Activated CD4-positive, alpha-beta memory T cell treated with anti-CD3 and anti-CD28 coated beads for 36 hours (primary cell): ENCODE measurements at regions of chr12 and their contacts with region 1.

Region 1: DNA sequence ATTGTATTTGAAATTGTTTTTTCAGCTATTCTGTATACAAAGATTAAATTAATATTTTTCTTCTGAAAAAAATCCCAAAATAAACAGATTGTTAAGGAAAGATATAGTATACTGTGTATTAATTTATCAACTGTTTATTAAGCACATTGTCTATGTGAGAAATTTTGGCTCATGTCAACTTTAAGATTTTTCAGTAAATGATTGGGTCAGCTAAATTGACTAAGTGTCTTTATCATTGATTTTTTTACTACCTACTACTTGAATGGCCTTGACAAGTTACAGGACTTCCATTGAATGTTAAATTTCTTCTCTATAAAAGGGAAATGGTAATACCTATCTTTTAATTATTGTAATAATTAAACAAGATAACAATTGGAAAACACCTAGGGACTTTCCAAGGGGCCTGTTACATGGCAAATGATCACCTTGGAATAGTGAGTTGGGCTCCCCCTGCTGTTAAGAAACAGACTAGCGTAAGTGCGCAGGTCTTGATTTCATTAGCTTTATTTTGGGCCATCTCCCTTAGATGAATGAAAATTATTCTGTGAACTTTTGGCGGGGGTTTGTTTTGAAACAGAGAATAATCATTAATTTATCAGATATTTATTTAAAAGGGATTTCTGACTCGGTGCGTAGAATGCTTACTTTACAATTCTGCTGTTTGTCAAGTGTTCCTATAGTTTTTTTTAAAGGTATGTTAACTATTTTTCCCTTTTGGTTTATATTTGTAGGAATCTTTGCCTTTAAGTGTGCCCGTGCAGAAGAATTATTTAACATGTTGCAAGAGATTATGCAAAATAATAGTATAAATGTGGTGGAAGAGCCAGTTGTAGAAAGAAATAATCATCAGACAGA is 14.5 kb upstream of the CCT2 start:
- DNase-seq: peak; percentile 54
- H3K4me3 Mint-ChIP-seq: no peak overlapping the region
- H3K27ac Mint-ChIP-seq: no peak overlapping the region
- H3K4me1 Mint-ChIP-seq: peaks cover 9% of the 10 kb centered on the region
- H3K27me3 Mint-ChIP-seq: no peaks in the 10 kb centered on the region

Region 2: DNA sequence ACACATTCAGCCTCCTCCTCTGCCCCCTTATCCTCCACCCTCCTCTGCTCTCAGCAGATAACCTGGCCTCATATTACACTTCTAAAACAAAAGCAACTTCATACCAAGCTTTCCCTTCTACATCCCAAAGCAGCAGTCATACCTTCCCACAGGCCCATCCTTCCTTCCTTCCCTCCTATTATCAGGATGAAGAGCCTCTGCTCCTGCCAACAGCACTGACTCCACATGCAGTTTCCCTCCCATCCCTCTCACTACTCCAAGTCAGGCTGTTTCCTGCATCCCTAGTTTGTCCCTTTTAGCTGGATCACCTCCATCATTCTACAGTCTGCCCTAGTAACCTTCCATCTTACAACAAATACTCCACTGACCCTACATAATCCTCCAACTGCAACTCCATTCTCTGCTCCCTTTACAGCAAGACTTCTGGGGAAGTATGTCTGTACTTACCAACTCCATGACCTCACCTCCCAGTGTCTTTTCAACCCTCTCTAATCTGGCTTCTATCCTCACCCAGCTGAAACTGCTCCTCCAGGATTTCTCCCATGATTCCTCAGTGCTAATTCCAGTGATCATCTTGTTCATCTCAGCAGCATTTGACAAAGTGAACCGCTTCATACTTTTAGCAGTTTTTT is 216.1 kb before region 1 on chr12:
- CTCF ChIA-PET with region 1: interaction called, 76 read pairs
- POLR2A ChIA-PET with region 1: interaction called, 4 read pairs
- intact Hi-C with region 1: loop called (anchors 1 kb)
- DNase-seq: no peak
- H3K4me3 Mint-ChIP-seq: no peak overlapping the region
- H3K27ac Mint-ChIP-seq: no peak overlapping the region
- H3K4me1 Mint-ChIP-seq: peaks cover 17% of the 10 kb centered on the region
- H3K27me3 Mint-ChIP-seq: no peaks in the 10 kb centered on the region

Region 3: GRCh38 chr12:69415471-69416275 is 155.1 kb before region 1 on chr12:
- CTCF ChIA-PET with region 1: interaction called, 3 read pairs
- POLR2A ChIA-PET with region 1: no interaction called
- intact Hi-C with region 1: loop called (anchors 1 kb)
- DNase-seq: peak; percentile 15
- H3K4me3 Mint-ChIP-seq: no peak overlapping the region
- H3K27ac Mint-ChIP-seq: no peak overlapping the region
- H3K4me1 Mint-ChIP-seq: no peaks in the 10 kb centered on the region
- H3K27me3 Mint-ChIP-seq: no peaks in the 10 kb centered on the region

Region 4: GRCh38 chr12:69534389-69534822 is 36.4 kb before region 1 on chr12:
- CTCF ChIA-PET with region 1: interaction called, 16 read pairs
- POLR2A ChIA-PET with region 1: no interaction called
- intact Hi-C with region 1: no loop called
- DNase-seq: peak; percentile 59
- H3K4me3 Mint-ChIP-seq: no peak overlapping the region
- H3K27ac Mint-ChIP-seq: peak overlapping the region; percentile 30
- H3K4me1 Mint-ChIP-seq: peaks cover 20% of the 10 kb centered on the region
- H3K27me3 Mint-ChIP-seq: no peaks in the 10 kb centered on the region

Region 5: DNA sequence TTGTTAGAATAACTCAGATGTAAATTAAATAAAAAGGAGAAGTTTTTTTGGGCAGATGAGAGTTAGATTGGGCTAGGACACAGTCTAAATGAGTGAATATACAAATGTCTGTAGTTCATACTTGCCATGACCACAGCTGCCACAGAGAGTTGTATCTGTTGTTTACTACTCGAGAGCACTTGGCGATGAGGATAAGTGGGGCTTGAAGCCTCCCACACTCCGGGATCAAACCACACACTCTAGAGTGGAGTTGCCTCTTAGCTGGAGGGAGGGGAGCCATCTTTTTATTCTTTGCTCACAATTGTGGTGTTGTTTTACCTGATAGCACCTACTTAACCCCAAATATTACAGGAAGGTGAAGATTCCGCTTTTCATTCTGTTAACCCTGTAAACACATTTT is 100.8 kb after region 1 on chr12:
- CTCF ChIA-PET with region 1: no interaction called
- POLR2A ChIA-PET with region 1: no interaction called
- intact Hi-C with region 1: no loop called
- DNase-seq: no peak
- H3K4me3 Mint-ChIP-seq: no peak overlapping the region
- H3K27ac Mint-ChIP-seq: no peak overlapping the region
- H3K4me1 Mint-ChIP-seq: no peaks in the 10 kb centered on the region
- H3K27me3 Mint-ChIP-seq: peaks cover 1% of the 10 kb centered on the region